Activated CD8-positive, alpha-beta T cell treated with anti-CD3 and anti-CD28 coated beads, Interleukin-2, amount 10 ng/mL, durations not matched to agents 7 days and 5 days (primary cell): ENCODE measurements at regions of chr14 and their contacts with region 1.

Region 1: DNA sequence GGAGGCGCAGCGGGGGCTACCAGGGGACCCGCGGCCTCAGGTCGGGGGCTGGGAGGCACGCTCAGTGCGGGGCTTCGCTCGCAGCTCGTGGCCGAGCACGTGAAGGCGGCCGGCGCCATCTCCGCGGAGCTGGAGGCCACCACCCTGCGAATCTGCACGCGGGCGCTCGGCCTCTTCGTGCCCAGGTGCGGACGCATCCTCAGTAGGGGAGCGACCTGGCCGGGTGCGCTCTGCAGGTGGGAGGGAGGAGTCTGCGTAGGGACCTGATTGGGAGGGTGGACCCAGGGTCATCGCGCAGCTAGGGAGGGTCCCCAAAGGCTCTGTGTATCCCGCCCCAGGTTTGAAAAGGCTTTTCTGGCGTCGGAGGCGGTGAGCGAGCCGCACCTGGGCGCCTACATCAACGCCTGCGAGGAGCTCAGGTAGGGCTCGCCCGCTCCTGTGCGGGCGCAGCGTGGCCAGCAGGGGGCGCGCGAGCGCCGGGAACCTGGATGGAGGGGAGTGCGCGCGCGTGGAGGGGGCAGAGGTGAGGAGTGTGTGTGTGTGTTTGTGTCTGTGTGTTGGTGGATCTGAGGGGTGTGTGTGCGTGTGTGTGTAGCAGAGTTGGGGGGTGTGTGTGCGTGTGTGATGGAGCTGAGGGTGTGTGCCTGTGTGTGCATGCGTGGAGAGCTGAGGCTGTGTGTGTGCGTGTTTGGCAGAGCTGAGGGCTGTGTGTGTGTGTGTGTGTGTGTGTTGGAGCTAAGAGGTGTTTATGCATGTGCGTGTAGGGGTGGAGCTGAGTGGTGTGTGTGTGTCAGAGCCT is 10.3 kb downstream of the EXOC3L4 start:
- DNase-seq: peak; percentile 74
- ATAC-seq: peak; percentile 88
- H3K4me3 Mint-ChIP-seq: no peak overlapping the region
- H3K27ac Mint-ChIP-seq: peak overlapping the region; percentile 39
- H3K4me1 Mint-ChIP-seq: peaks cover 6% of the 10 kb centered on the region
- H3K27me3 Mint-ChIP-seq: peaks cover 30% of the 10 kb centered on the region

Region 2: GRCh38 chr14:103078093-103078749 is 26.6 kb before region 1 on chr14:
- CTCF ChIA-PET with region 1: interaction called, 14 read pairs
- POLR2A ChIA-PET with region 1: no interaction called
- DNase-seq: peak; percentile 82
- ATAC-seq: peak; percentile 74
- H3K4me3 Mint-ChIP-seq: no peak overlapping the region
- H3K27ac Mint-ChIP-seq: no peak overlapping the region
- H3K4me1 Mint-ChIP-seq: no peaks in the 10 kb centered on the region
- H3K27me3 Mint-ChIP-seq: peaks cover 5% of the 10 kb centered on the region

Region 3: DNA sequence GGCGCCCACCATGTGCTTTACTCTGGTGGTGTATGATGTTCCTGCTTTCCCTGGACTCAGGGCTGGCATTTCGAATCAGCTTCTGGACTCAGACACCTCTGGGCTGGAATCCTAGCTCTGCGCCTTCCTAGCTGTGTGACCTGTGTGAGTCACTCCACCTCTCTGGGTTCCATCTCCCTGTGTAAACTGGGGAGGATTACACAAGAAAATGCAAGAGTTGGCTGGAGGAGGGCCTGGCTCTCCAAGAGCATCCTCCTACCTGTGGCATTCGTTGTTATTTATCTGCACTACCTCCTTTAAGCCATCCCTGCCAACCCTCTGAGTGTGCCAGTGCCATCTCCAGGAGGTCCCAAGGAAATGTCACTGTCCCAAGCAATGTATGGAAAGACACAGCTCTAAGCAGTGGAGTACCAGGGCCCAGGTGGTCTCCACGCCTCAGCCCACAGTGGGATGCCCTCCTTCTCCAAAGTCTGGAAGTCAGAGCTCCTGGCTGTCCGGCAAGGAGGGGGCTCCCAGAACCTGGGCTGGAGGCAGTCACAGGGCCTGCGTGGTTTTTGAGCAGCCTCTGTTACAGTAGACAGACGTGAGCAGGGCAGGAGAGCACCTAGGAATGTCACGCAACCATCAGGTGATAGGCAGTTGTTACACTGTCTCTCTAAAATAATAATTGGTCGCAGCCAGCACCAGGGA is 11.2 kb after region 1 on chr14:
- CTCF ChIA-PET with region 1: interaction called, 16 read pairs
- POLR2A ChIA-PET with region 1: no interaction called
- DNase-seq: no peak
- ATAC-seq: no peak
- H3K4me3 Mint-ChIP-seq: no peak overlapping the region
- H3K27ac Mint-ChIP-seq: no peak overlapping the region
- H3K4me1 Mint-ChIP-seq: peaks cover 11% of the 10 kb centered on the region
- H3K27me3 Mint-ChIP-seq: peaks cover 3% of the 10 kb centered on the region

Region 4: DNA sequence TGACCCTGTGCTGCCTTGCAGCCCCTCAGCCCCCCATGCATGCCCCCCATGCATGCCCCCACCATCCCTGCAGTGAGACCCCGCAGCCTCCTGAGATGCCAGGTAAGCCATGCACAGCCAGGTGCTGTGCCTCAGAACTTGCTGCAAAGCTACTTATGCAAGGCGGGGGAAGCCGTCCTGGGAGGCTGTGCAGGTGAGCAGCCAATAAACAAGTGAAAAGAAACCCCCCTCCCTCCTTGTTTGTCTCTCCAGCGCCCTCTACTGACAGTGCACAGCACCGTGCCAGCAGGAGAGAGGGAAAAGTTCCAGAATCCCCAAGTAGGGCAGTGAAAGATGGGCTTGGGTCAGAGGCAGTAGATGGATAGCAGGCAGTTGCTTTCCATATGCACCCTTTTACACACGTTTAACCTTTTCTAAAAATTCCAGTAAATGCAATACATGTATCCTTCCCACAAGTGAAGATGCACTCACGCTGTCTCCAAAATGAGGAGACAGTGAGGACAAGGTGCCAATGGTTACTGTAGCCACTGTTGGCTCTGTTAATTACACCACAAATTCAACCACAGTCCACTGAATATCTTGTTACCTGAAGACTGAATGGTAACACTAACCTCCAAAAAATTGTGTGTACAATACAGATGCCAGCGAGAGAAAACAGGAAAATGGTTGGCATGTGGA is 36.4 kb after region 1 on chr14:
- CTCF ChIA-PET with region 1: interaction called, 10 read pairs
- POLR2A ChIA-PET with region 1: no interaction called
- DNase-seq: peak; percentile 42
- ATAC-seq: no peak
- H3K4me3 Mint-ChIP-seq: no peak overlapping the region
- H3K27ac Mint-ChIP-seq: no peak overlapping the region
- H3K4me1 Mint-ChIP-seq: peaks cover 5% of the 10 kb centered on the region
- H3K27me3 Mint-ChIP-seq: peaks cover 16% of the 10 kb centered on the region

Region 5: GRCh38 chr14:103292426-103293374 is 187.8 kb after region 1 on chr14:
- CTCF ChIA-PET with region 1: interaction called, 42 read pairs
- POLR2A ChIA-PET with region 1: no interaction called
- DNase-seq: peak; percentile 79
- ATAC-seq: peak; percentile 89
- H3K4me3 Mint-ChIP-seq: no peak overlapping the region
- H3K27ac Mint-ChIP-seq: no peak overlapping the region
- H3K4me1 Mint-ChIP-seq: no peaks in the 10 kb centered on the region
- H3K27me3 Mint-ChIP-seq: peaks cover 4% of the 10 kb centered on the region